Activated CD4-positive, alpha-beta T cell treated with anti-CD3 and anti-CD28 coated beads for 36 hours (primary cell): ENCODE measurements at regions of chr20 and their contacts with region 1.

Region 1: GRCh38 chr20:59598625-59599310 is 5.6 kb upstream of the PHACTR3 start:
- DNase-seq: peak; percentile 65
- ATAC-seq: no peak
- H3K4me3 Mint-ChIP-seq: no peak overlapping the region
- H3K27ac Mint-ChIP-seq: no peak overlapping the region
- H3K4me1 Mint-ChIP-seq: no peaks in the 10 kb centered on the region
- H3K27me3 Mint-ChIP-seq: peaks cover 42% of the 10 kb centered on the region

Region 2: DNA sequence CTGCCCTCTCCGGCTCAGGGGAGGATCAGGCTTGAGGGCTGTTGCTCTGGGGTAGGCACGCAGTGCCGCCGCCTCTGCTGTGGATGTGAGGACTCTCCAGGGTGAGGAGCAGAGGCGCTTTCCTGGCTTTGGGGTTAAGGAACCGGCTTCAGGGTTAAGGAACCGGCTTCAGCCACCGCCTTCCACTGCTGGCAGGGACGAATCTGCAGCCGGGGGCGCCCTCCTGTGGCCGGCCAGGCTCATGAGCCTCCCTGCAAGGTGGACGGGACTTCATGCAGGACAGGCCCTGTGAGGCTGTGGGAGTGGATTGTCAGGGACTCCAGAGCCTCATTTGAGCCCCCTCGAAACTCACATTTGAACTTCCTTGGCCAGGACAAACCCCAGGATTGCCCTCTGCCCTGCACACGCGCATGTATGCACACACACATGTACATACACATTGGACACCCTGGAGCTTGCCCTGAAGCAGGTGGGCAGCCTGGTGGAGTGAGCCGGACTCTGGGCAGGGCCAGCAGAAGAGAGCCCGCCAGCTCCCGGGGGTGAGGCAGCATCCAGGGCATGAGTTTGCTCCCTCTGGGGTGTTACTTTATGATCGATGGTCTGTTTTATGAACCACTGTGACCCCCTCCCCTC is 152.4 kb after region 1 on chr20:
- CTCF ChIA-PET with region 1: interaction called, 4 read pairs
- POLR2A ChIA-PET with region 1: no interaction called
- intact Hi-C with region 1: loop called (anchors 1 kb)
- DNase-seq: peak; percentile 74
- ATAC-seq: peak; percentile 64
- H3K4me3 Mint-ChIP-seq: no peak overlapping the region
- H3K27ac Mint-ChIP-seq: no peak overlapping the region
- H3K4me1 Mint-ChIP-seq: no peaks in the 10 kb centered on the region
- H3K27me3 Mint-ChIP-seq: peaks cover 12% of the 10 kb centered on the region